Ovary (tissue), 10 donors: ENCODE measurements at regions of chr6 and their contacts with region 1.

Region 1: DNA sequence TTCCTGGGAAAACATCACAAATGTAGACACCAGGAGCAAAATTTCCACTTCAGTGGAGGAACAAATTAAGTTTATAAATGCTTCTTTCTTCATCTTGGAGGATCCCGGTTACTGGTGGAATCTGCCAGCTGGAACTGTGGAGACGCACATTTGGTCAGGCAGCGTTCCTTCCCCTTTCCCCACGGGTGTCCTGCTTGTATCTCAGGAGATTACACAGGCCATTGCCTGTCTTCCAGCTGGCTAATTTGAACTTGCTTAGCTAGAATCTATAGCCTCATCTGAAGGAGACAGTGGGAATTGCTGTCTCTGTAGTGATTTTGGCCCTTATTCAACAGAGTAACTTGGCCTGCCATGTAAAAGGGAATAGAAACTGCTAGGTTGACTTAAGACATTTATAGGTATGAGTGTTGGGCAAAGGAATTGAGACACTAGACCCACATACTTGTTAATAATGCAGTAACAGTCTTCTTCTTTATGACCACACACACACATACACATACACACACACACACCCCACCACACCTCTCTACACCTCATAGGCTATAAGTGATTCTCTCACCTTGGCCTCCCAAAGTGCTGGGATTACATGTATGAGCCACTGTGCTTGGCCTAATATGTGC is 34.4 kb downstream of the TSBP1 start:
- DNase-seq: no peak
- H3K4me3 ChIP-seq: no peak overlapping the region
- H3K27ac ChIP-seq: no peak overlapping the region
- H3K4me1 ChIP-seq: no peaks in the 10 kb centered on the region
- H3K27me3 ChIP-seq: no peaks in the 10 kb centered on the region
- CTCF ChIP-seq: no peak
- EP300 ChIP-seq: no peak
- POLR2A ChIP-seq: no peak

Region 2: DNA sequence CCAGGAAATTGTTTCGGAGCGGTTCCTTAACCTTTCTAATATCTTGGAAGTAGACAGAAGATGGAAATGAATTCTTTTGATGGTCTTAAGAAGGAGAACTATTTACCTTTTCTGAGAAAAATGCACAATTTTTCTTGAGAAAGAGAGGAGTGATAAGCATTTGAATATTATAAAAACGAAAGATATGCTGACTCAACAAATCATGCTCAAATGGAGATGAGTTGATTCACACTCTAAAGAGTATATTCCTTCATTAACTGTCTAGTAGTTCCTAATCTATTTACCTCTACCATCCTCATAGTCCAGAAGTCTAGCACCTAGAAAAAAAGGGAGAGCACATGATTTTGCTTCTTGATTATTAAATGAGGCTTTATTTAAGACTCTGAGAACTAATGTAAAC is 30.3 kb after region 1 on chr6:
- intact Hi-C with region 1: loop called in 1 of 4 experiments (anchors 2 kb)
- DNase-seq: no peak
- H3K4me3 ChIP-seq: no peak overlapping the region
- H3K27ac ChIP-seq: no peak overlapping the region
- H3K4me1 ChIP-seq: no peaks in the 10 kb centered on the region
- H3K27me3 ChIP-seq: no peaks in the 10 kb centered on the region
- CTCF ChIP-seq: no peak
- EP300 ChIP-seq: no peak
- POLR2A ChIP-seq: no peak